H1 (cell line): ENCODE measurements at regions of chr12 and their contacts with region 1.

Region 1: DNA sequence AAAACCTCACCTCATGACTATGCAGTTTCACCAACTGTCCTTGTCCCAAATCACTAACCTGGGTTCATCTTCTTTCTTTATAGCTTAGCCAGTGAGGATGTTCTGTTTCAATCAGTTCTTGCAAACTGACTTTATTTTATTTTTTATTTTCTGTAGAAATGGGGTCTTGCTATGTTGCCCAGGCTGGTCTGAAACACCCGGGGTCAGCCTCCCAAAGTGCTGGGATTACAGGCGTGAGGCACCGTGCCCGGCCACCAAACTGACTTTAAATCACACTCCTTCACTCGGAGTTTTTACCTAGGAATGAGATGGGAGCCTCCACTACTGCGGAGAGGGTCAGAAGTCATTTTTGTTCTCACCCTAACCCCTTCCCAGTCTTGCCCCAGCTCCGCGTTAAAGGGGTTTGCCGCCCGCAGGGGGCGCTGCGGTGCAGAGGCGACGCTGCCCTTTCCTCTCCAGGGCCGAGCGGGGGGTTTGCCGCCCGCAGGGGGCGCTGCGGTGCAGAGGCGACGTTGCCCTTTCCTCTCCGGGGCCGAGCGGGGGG is 7.0 kb upstream of the B4GALNT3 start:
- DNase-seq: peak in 1 of 2 experiments; percentile 80
- H3K4me3 ChIP-seq: peak overlapping the region in 1 of 4 experiments; percentile 27; a peak in 1 of 8 replicates
- H3K27ac ChIP-seq: no peak overlapping the region
- H3K4me1 ChIP-seq: no peaks in the 10 kb centered on the region
- H3K27me3 ChIP-seq: no peaks in the 10 kb centered on the region; a peak in 2 of 7 replicates
- CTCF ChIP-seq: peak in 2 of 3 experiments; percentile 41 to 57; a peak in 2 of 4 replicates
- EP300 ChIP-seq: no peak
- POLR2A ChIP-seq: no peak
- RAD21 ChIP-seq: no peak

Region 2: GRCh38 chr12:464484-465267 is 11.9 kb after region 1 on chr12:
- CTCF ChIA-PET with region 1: interaction called, 28 read pairs
- POLR2A ChIA-PET with region 1: no interaction called
- DNase-seq: no peak
- H3K4me3 ChIP-seq: no peak overlapping the region
- H3K27ac ChIP-seq: no peak overlapping the region
- H3K4me1 ChIP-seq: peaks cover 0 to 4% (median 0%) of the 10 kb centered on the region in 4 experiments; a peak in 2 of 7 replicates
- H3K27me3 ChIP-seq: peaks cover 0 to 20% (median 8%) of the 10 kb centered on the region in 4 experiments; a peak in 5 of 7 replicates
- CTCF ChIP-seq: no peak
- EP300 ChIP-seq: no peak
- POLR2A ChIP-seq: no peak
- RAD21 ChIP-seq: no peak

Region 3: GRCh38 chr12:503111-503761 is 50.5 kb after region 1 on chr12:
- CTCF ChIA-PET with region 1: interaction called, 15 read pairs
- POLR2A ChIA-PET with region 1: interaction called, 3 read pairs
- DNase-seq: no peak
- H3K4me3 ChIP-seq: no peak overlapping the region
- H3K27ac ChIP-seq: no peak overlapping the region
- H3K4me1 ChIP-seq: peaks cover 0 to 6% (median 3%) of the 10 kb centered on the region in 4 experiments; a peak in 6 of 7 replicates
- H3K27me3 ChIP-seq: no peaks in the 10 kb centered on the region
- CTCF ChIP-seq: no peak
- EP300 ChIP-seq: no peak
- POLR2A ChIP-seq: no peak
- RAD21 ChIP-seq: no peak

Region 4: DNA sequence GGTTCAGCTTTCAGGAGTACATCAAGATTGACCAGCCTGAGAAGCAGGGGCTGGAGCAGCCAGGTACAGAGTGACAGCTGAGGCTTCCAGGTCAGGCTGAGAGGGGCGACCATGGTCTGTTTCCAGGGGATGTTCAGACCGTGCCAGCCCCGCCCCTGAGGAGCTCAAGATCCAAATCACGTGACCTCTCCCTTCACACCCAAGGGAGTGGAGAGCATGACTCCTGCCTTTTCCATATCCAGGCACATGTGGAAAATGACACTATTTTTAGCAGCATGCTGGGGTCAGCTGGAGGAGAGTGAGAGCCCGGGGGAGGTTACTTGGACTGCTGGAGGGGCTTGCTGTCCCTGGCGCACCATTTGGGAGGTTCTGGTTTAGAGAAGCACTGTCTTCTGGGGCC is 99.7 kb after region 1 on chr12:
- CTCF ChIA-PET with region 1: interaction called, 150 read pairs
- POLR2A ChIA-PET with region 1: no interaction called
- DNase-seq: no peak
- H3K4me3 ChIP-seq: no peak overlapping the region
- H3K27ac ChIP-seq: no peak overlapping the region
- H3K4me1 ChIP-seq: no peaks in the 10 kb centered on the region
- H3K27me3 ChIP-seq: no peaks in the 10 kb centered on the region
- CTCF ChIP-seq: no peak
- EP300 ChIP-seq: no peak
- POLR2A ChIP-seq: no peak
- RAD21 ChIP-seq: no peak